Ascending aorta (tissue), 2 donors: ENCODE measurements at regions of chr22 and their contacts with region 1.

Region 1: GRCh38 chr22:45537734-45538181 is 35.1 kb downstream of the FBLN1 start:
- DNase-seq: peak; percentile 56 to 90
- H3K4me3 ChIP-seq: peak overlapping the region in 1 of 2 donors; percentile 35
- H3K27ac ChIP-seq: peak overlapping the region; percentile 72 to 79
- H3K4me1 ChIP-seq: peaks cover 4 to 28% of the 10 kb centered on the region in 2 donors
- H3K27me3 ChIP-seq: no peaks in the 10 kb centered on the region
- CTCF ChIP-seq: no peak

Region 2: GRCh38 chr22:45413368-45414211 is 124.2 kb before region 1 on chr22 and contains the starts of genes RIBC2 and SMC1B:
- intact Hi-C with region 1: no loop called
- DNase-seq: peak in 1 of 2 donors; percentile 87
- H3K4me3 ChIP-seq: peak within 1 kb of the TSS; percentile 52 to 54
- H3K27ac ChIP-seq: peak within 1 kb of the TSS in 1 of 2 donors; percentile 5
- H3K4me1 ChIP-seq: peaks cover 0 to 7% of the 10 kb centered on the region in 2 donors
- H3K27me3 ChIP-seq: no peaks in the 10 kb centered on the region
- CTCF ChIP-seq: peak in 1 of 3 experiments; percentile 2
- total RNA-seq, gene RIBC2: not detected
- total RNA-seq, gene SMC1B: not detected

Region 3: GRCh38 chr22:45478108-45478771 is 59.5 kb before region 1 on chr22:
- intact Hi-C with region 1: loop called (anchors 2 kb)
- DNase-seq: no peak
- H3K4me3 ChIP-seq: no peak overlapping the region
- H3K27ac ChIP-seq: peak overlapping the region; percentile 65 to 86
- H3K4me1 ChIP-seq: peaks cover 5 to 22% of the 10 kb centered on the region in 2 donors
- H3K27me3 ChIP-seq: no peaks in the 10 kb centered on the region
- CTCF ChIP-seq: no peak

Region 4: GRCh38 chr22:45503816-45504771 is 33.7 kb before region 1 on chr22:
- intact Hi-C with region 1: no loop called
- DNase-seq: no peak
- H3K4me3 ChIP-seq: peak overlapping the region; percentile 56 to 70
- H3K27ac ChIP-seq: peak overlapping the region; percentile 66 to 72
- H3K4me1 ChIP-seq: peaks cover 0 to 15% of the 10 kb centered on the region in 2 donors
- H3K27me3 ChIP-seq: no peaks in the 10 kb centered on the region
- CTCF ChIP-seq: no peak